OCI-LY7 (cell line): ENCODE measurements at regions of chr1 and their contacts with region 1.

Region 1: GRCh38 chr1:43934101-43934985 is 742 bp downstream of the ARTN start:
- DNase-seq: peak; percentile 70
- H3K4me3 ChIP-seq: no peak overlapping the region
- H3K27ac ChIP-seq: no peak overlapping the region
- H3K4me1 ChIP-seq: no peaks in the 10 kb centered on the region
- CTCF ChIP-seq: peak; percentile 82

Region 2: DNA sequence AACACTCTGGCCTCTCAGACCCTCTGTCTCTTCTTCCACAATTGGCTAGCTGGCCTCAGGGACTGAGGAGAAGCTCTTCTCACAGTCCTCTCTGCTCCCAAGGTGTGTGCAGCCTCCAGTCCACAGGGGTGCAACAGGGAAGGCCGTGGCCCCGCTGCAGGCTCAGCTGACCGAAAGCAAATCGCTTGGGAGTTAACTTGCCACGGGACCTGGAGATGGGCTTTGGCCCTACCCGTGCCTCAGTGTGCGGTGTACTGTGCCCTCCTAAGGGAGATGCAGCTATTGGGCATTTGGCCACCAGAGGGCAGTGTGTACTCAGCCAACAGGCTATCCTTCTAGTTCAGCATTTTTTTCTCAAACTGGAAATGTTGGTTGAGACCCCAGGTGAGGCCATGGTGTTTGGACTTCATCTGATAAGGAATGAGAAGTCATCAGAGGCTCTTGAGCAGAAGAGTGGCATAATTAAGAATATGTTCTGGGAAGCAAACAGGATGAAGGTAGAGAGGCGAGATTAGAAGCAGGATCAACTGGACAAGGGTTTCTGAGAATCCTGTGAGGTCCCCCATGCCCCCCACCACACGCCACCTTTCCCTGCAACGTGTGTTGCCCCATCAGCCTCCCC is 707.1 kb before region 1 on chr1:
- CTCF ChIA-PET with region 1: no interaction called
- POLR2A ChIA-PET with region 1: no interaction called
- intact Hi-C with region 1: loop called (anchors 1 kb)
- DNase-seq: peak; percentile 86
- H3K4me3 ChIP-seq: no peak overlapping the region
- H3K27ac ChIP-seq: no peak overlapping the region
- H3K4me1 ChIP-seq: peaks cover 4% of the 10 kb centered on the region
- CTCF ChIP-seq: peak; percentile 93

Region 3: DNA sequence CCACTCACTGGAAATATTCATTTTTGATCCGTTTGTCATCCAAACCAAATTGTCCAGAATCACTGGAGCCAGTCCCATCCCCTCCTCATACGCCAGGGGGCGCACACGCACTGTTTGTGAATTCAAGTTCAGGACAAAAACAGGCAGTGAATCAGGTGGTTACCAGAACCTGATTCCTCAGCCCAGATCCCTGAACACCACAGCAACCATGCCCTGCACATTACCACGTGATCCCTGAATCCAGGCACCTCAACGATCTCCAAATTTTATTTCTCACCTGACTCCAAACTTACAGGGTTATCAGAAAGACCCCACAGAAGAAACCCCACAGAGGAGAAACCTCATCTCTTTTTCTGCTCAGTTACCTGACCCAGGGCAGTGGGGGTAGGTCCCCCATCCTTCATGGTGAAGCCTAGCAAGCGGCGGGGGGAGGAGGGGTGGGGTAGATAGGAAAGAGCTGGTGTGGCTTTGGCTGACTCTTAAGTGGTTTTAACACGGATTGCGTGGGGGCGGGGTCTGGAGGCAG is 405.1 kb before region 1 on chr1:
- CTCF ChIA-PET with region 1: no interaction called
- POLR2A ChIA-PET with region 1: no interaction called
- intact Hi-C with region 1: loop called (anchors 2 kb)
- DNase-seq: peak; percentile 79
- H3K4me3 ChIP-seq: no peak overlapping the region
- H3K27ac ChIP-seq: no peak overlapping the region
- H3K4me1 ChIP-seq: peaks cover 3% of the 10 kb centered on the region
- CTCF ChIP-seq: peak; percentile 98

Region 4: GRCh38 chr1:43763497-43763973 is 170.8 kb before region 1 on chr1:
- CTCF ChIA-PET with region 1: interaction called, 40 read pairs
- POLR2A ChIA-PET with region 1: interaction called, 4 read pairs
- intact Hi-C with region 1: loop called (anchors 1 kb)
- DNase-seq: peak; percentile 75
- H3K4me3 ChIP-seq: no peak overlapping the region
- H3K27ac ChIP-seq: no peak overlapping the region
- H3K4me1 ChIP-seq: peaks cover 5% of the 10 kb centered on the region
- CTCF ChIP-seq: peak; percentile 99

Region 5: DNA sequence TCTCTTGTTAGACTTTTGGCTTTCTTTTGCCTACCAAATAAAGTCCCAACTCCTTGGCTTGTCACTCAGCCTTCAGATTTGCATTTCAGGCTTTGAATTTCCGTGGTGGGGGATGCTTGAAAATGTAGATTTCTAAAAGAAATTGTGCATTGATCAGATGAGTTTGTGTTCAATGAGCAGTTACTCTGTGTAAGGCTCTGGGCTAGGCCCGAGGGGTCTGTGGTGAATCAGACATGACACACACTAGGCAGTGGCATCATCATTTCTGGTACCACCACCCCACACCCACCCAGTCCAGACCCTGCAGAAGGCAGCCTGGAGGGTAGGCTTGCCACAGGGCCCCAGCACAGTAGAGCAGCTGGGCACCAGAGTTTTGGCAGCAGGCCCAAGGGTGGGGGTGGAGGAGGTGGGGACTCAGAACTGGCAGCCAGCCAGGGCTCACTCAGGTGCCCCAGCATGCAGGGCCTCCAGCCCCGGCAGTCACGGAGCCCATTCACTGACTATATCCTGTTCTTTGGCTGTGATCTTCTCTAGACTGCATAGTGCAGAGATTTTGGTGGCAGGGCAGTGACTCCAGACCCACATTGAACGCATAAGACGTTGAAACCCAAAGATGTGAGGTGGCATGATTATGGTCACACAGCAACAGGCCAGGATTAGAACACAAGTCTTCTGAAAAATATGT is 97.9 kb before region 1 on chr1:
- CTCF ChIA-PET with region 1: no interaction called
- POLR2A ChIA-PET with region 1: no interaction called
- intact Hi-C with region 1: loop called (anchors 5 kb)
- DNase-seq: peak; percentile 94
- H3K4me3 ChIP-seq: peak overlapping the region; percentile 48
- H3K27ac ChIP-seq: peak overlapping the region; percentile 93
- H3K4me1 ChIP-seq: peaks cover 63% of the 10 kb centered on the region
- CTCF ChIP-seq: no peak

Region 6: DNA sequence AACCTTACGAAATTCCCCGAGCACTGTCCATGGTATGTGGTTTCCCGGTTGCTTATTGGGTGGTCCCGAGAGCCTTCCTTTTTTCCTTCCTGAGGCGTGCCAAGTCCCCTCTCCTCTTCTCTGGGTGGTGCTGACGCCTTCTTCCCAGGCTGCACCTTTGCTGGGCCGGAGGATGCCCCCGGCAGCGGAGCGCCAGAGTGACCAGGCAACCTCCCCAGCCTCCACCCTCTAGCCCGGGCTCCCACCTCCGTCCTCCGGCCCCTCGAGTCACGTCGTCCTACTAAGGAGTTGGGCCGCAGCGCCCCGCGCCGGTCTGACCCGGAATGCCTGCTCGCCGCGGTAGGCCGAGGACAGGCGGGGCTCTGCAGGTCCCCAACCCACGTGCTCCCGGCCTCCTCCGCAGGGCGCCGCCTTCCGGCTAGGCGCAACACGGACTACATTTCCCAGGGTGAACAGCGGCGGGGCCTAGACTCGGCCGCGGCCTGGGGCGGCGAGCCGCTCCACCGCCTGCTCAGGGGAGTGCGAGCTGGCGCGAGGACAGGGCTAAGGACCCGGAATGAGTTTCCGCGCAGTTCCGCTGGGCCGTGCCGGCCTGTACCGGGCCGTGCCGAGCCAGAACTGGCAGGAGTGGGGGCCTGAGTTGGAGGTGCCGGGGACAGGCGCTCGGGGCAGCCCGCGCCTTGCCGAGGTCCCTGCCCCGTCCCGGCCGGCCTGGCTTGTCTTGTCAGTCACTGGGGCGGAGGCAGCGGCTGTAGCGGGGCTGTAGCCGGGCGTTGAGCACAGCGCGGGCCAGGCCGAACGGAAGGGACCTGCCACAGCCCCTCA is 12.1 kb after region 1 on chr1 and contains the start of gene IPO13:
- CTCF ChIA-PET with region 1: interaction called, 13 read pairs
- POLR2A ChIA-PET with region 1: no interaction called
- intact Hi-C with region 1: no loop called
- DNase-seq: peak; percentile 97
- H3K4me3 ChIP-seq: peak within 1 kb of the TSS; percentile 76
- H3K27ac ChIP-seq: peak within 1 kb of the TSS; percentile 56
- H3K4me1 ChIP-seq: peaks cover 22% of the 10 kb centered on the region
- CTCF ChIP-seq: peak; percentile 84
- total RNA-seq, gene IPO13: 13.1 and 17.8 TPM in 2 replicates